ENCODE measurements at regions of chrX and their contacts with region 1.

Region 1: GRCh38 chrX:78129714-78130113 is 9.7 kb downstream of the TAF9B start:
- DNase-seq: no peak
- ATAC-seq: peak; percentile 22
- H3K4me3 Mint-ChIP-seq: no peak overlapping the region
- H3K27ac Mint-ChIP-seq: peak overlapping the region; percentile 78
- H3K4me1 Mint-ChIP-seq: peaks cover 11% of the 10 kb centered on the region
- H3K27me3 Mint-ChIP-seq: no peaks in the 10 kb centered on the region
- CTCF ChIP-seq: no peak

Region 2: GRCh38 chrX:78066110-78066509 is 63.6 kb before region 1 on chrX:
- CTCF ChIA-PET with region 1: no interaction called
- POLR2A ChIA-PET with region 1: no interaction called
- intact Hi-C with region 1: no loop called
- DNase-seq: no peak
- ATAC-seq: no peak
- H3K4me3 Mint-ChIP-seq: no peak overlapping the region
- H3K27ac Mint-ChIP-seq: no peak overlapping the region
- H3K4me1 Mint-ChIP-seq: peaks cover 12% of the 10 kb centered on the region
- H3K27me3 Mint-ChIP-seq: no peaks in the 10 kb centered on the region
- CTCF ChIP-seq: no peak

Region 3: DNA sequence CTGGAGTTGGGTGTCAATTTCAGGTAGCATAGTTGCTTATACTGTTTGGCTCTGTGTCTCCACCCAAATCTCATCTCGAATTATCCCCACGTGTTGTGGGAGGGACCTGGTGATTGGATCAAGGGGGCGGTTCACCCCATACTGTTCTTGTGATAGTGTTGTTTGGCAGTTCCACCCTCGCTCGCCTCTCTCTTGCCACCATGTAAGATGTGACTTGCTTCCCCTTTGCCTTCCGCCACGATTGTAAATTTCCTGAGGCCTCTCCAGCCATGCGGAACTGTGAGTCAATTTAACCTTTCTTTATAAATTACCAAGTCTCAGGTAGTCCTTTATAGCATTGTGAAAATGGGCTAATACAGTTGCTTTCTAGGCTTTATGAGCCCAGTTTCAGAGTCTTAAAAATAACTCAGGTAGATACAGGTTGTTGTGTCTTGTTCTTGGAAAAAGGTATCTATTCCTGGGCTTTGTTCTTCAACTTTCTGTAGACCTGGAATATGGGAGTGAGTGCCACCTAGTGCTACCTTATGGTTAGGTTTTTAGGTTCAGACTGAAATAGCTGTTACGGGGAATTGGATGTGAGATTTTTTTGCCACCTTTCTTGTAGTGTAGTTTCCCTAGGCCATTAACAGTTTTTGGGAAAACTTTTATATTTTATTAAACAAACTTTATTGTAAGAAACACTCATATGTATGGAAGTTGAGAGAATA is 10.0 kb before region 1 on chrX:
- CTCF ChIA-PET with region 1: interaction called, 3 read pairs
- POLR2A ChIA-PET with region 1: interaction called, 29 read pairs
- intact Hi-C with region 1: no loop called
- DNase-seq: no peak
- ATAC-seq: no peak
- H3K4me3 Mint-ChIP-seq: peak overlapping the region; percentile 15
- H3K27ac Mint-ChIP-seq: peak overlapping the region; percentile 74
- H3K4me1 Mint-ChIP-seq: peaks cover 70% of the 10 kb centered on the region
- H3K27me3 Mint-ChIP-seq: no peaks in the 10 kb centered on the region
- CTCF ChIP-seq: no peak

Measured in activated CD8-positive, alpha-beta T cell treated with anti-CD3 and anti-CD28 coated beads for 36 hours (primary cell).